ENCODE measurements at regions of chr18 and their contacts with region 1.

Region 1: DNA sequence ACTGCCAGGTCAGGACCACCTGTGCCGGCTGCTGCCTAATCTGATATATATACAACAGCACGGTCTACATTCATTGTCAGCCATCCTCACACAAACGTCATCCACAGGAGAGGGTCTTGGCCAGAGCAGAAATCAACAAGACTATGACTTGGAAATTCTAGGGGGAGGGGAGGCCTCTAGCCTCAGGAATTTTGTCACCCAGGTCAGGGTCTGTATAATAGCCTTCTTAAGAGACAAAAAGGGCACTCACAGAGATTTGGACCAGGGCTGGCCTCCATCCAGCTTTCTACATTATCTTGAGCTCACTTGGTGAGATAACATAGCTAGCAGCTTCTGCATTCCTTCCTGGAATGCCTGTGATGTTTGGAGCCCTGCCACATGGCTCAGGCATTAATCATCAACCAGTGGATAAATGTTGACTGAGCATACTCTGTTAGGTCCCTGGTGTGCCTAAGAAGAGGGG is 50.4 kb upstream of the CTIF start:
- DNase-seq: peak; percentile 72
- ATAC-seq: peak; percentile 90

Region 2: DNA sequence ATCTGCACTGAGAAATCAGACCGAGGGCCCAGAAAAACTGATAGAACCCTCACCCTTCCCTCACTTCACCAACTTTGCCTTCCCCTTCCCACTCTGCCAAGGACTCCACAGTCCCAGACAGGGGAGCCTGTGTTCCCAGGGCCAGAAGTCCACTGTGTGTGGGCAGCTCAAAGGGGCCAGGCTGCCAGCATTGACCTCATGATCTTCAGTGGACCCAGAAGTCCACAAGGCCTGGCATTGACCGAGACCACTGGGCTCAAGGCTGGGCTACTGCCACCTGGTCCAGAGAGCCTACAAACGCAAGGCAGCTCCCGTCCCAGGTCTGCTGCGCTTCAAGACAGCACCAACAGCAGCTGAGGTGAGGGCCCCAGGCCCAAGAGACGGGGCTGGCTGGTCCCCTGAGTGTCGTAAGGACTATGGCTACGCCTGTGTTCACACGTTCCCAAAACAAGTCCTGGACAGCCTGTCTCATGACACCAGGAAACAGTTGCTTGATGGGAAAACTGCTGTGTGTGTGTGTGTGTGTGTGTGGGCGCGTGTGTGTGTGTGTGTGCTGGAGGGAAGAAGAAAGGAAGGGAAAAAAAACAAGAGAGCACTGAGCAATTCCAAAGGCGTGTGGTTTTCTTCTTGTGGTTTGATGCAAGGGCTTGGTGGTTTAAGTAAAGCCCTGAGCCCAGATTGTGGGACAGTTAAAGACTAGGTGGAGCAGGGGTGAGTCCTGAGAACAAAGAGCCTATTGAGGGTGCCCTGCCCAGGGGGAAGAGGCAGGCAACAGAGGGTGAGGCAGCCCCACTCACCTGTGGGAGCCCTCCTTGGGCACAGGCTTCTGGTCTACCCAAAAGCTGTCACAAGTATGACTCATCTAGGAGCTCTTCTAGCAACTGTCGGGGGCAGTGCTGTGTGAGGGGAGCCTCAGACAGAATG is 32.6 kb before region 1 on chr18:
- intact Hi-C with region 1: no loop called
- DNase-seq: no peak
- ATAC-seq: no peak

Region 3: GRCh38 chr18:48538531-48539405 is 50.3 kb after region 1 on chr18 and contains the start of gene CTIF:
- intact Hi-C with region 1: loop called (anchors 2 kb)
- DNase-seq: peak; percentile 97
- ATAC-seq: peak; percentile 91
- total RNA-seq, gene CTIF: 74.0 TPM

Measured in Right ventricle myocardium inferior (tissue), 1 donor.